Activated CD4-positive, alpha-beta T cell treated with anti-CD3 and anti-CD28 coated beads for 36 hours (primary cell): ENCODE measurements at regions of chr2 and their contacts with region 1.

Region 1: GRCh38 chr2:17719562-17720371 is 33.8 kb downstream of the SMC6 start:
- DNase-seq: no peak
- ATAC-seq: no peak
- H3K4me3 Mint-ChIP-seq: no peak overlapping the region
- H3K27ac Mint-ChIP-seq: no peak overlapping the region
- H3K4me1 Mint-ChIP-seq: no peaks in the 10 kb centered on the region
- H3K27me3 Mint-ChIP-seq: no peaks in the 10 kb centered on the region

Region 2: GRCh38 chr2:17733599-17733998 is 13.8 kb after region 1 on chr2:
- CTCF ChIA-PET with region 1: interaction called, 12 read pairs
- POLR2A ChIA-PET with region 1: no interaction called
- intact Hi-C with region 1: no loop called
- DNase-seq: no peak
- ATAC-seq: no peak
- H3K4me3 Mint-ChIP-seq: no peak overlapping the region
- H3K27ac Mint-ChIP-seq: no peak overlapping the region
- H3K4me1 Mint-ChIP-seq: no peaks in the 10 kb centered on the region
- H3K27me3 Mint-ChIP-seq: no peaks in the 10 kb centered on the region

Region 3: DNA sequence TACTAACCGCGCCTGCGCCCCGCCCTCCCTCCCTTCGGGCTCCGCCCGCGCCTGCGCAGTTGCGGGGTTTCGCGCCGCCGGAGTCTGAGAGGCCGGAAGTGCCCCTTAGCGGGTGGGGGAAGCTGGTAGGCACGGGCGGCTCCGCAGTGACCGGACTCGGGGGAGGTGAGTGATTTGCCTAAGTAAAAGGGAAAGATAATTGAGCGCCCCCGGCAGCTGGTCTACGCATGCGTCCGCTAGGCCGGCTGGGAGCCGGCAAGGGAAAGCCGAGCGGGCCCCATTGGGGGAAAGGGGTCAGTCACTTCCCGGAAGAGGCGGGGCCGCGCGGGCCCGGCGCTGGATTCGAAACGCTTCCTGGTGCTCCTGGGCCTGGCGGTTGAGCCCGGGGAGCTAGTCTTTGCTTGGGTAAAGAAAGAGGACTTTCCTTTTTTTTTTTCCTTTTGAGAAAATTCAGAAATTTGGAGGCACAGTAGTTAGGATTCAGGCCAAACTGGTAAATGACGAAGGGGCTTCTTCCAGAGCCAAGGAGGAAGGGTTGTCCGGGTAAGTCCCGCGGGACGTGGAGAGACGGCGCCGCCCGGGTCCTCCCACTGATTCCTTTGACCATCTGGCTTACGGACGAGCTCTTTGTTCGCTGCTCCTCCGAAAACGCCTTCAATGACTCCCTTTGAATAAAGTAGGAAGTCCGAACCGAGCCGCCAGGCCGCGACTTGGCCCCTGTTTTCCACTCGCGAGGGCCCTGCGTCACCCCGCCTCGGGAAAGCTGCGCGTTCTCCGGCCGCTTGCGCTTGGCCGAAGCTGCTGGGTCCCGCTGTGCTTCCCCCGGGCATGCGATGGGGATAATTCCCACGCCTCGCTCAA is 34.3 kb after region 1 on chr2 and contains the starts of genes GEN1 and SMC6:
- CTCF ChIA-PET with region 1: interaction called, 3 read pairs
- POLR2A ChIA-PET with region 1: no interaction called
- intact Hi-C with region 1: loop called in 1 of 2 experiments (anchors 1 kb)
- DNase-seq: peak; percentile 95
- ATAC-seq: peak; percentile 90
- H3K4me3 Mint-ChIP-seq: peak within 1 kb of the TSS; percentile 91
- H3K27ac Mint-ChIP-seq: peak within 1 kb of the TSS; percentile 93
- H3K4me1 Mint-ChIP-seq: peaks cover 20% of the 10 kb centered on the region
- H3K27me3 Mint-ChIP-seq: no peaks in the 10 kb centered on the region
- total RNA-seq, gene GEN1: 21.9 to 25.4 TPM
- total RNA-seq, gene SMC6: 25.4 to 26.3 TPM

Region 4: DNA sequence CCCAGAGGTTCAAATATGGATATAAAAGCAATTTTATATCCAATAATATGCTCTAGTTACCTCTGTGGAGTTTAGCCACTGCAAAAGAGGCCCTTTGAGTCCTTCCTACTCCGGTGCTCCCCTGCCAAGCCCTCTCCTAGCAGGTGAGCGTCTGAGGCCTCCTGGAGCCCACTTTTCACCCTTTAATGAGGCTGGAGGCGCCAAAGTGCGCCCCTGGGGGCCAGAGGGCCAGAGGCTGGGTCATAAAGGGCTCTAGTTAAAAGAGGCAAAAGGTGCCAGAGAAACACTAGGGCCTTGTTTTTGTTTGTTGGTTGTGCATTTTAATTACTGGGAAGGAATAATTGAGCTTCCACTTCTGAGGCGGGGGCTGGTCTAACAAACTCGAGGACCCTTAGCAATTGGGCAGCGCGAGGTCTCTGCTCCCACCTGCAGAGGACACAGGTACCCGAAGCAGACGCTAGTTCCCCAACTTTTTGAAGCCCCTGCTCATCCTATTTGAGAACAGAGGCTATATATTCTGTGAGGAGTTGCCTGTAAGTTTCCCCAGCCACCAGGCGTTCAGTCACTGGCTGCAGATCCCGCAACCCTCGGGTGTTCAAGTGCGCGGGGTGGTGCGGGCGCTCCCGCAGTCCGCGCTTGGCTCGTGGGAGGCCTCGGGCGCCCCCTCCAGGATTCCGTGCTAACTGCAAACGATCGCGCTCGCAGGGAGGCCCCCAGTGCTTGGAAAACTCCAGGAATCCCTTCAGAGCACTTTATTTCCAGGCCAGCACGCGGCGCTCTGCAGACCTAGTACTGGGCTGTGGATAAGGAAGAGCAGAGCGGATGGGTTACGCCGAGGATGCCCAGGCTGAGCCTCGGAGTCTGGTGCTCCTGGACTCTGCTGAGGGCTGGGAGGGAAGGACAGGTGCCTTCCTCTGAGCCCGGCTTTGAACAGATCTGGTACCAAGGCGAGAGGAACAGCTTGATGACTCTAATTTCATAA is 110.6 kb after region 1 on chr2:
- CTCF ChIA-PET with region 1: interaction called, 4 read pairs
- POLR2A ChIA-PET with region 1: no interaction called
- intact Hi-C with region 1: loop called (anchors 1 to 2 kb)
- DNase-seq: peak; percentile 72
- ATAC-seq: peak; percentile 84
- H3K4me3 Mint-ChIP-seq: no peak overlapping the region
- H3K27ac Mint-ChIP-seq: no peak overlapping the region
- H3K4me1 Mint-ChIP-seq: no peaks in the 10 kb centered on the region
- H3K27me3 Mint-ChIP-seq: peaks cover 35% of the 10 kb centered on the region

Region 5: DNA sequence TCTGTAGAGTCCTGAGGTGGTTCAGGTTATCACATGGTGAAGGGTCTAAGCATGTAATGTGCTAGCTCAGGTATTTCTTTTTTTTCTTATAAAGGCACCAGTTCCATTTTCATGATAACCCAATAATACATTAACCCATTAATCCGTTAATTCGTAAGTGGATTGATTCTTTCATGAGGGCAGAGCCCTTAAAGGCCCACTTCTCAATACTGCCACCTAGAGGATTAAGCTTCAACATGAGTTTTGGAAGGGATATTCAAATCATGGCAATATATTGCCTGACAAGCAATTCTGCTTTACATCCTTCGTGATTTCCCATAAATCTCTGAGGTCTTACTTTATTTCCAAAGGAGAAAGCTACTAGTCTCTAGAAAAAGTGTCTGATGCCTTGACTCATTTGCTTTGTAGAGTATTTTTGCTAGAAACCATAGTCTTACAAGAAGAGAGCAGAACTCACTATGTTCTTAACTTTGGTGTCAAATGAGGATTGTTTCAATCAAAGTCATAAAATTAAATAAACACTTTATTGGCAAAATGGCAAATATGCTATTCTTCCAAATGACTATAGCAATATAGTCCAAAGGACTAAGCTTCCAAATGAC is 430.0 kb after region 1 on chr2:
- CTCF ChIA-PET with region 1: interaction called, 5 read pairs
- POLR2A ChIA-PET with region 1: no interaction called
- intact Hi-C with region 1: loop called in 1 of 2 experiments (anchors 5 kb)
- DNase-seq: no peak
- ATAC-seq: peak; percentile 39
- H3K4me3 Mint-ChIP-seq: no peak overlapping the region
- H3K27ac Mint-ChIP-seq: no peak overlapping the region
- H3K4me1 Mint-ChIP-seq: no peaks in the 10 kb centered on the region
- H3K27me3 Mint-ChIP-seq: peaks cover 6% of the 10 kb centered on the region

Region 6: DNA sequence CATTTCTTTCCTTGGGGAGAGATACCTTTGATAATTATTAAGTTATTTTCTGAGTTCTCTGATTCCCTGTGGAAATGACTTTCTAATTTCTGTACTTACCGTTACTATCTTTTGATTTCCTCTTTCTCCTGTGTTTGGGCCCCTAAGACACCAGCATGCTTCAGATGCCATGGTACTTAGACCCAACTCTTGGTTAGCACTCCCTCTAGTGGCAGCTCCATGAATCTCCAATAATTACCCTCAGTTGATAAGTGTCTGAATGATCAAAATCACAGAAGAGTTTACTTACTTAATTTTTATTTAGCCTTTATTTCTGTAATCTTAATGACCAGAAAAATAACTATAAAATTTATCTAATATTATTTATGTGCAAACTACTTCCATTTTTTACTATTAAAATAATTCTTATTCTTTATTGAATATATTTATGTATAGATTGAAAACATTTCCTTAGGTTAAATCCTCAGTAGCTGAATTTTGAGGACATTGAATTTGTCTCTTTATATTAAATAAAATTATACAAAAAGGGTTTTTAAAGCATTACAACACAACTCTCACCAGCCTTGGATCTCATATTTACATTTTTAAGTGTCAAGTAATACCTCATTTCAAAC is 459.1 kb after region 1 on chr2:
- CTCF ChIA-PET with region 1: no interaction called
- POLR2A ChIA-PET with region 1: no interaction called
- intact Hi-C with region 1: loop called in 1 of 2 experiments (anchors 1 kb)
- DNase-seq: peak; percentile 52
- ATAC-seq: peak; percentile 55
- H3K4me3 Mint-ChIP-seq: no peak overlapping the region
- H3K27ac Mint-ChIP-seq: no peak overlapping the region
- H3K4me1 Mint-ChIP-seq: no peaks in the 10 kb centered on the region
- H3K27me3 Mint-ChIP-seq: peaks cover 6% of the 10 kb centered on the region

Region 7: GRCh38 chr2:18378020-18378653 is 658.4 kb after region 1 on chr2:
- CTCF ChIA-PET with region 1: no interaction called
- POLR2A ChIA-PET with region 1: no interaction called
- intact Hi-C with region 1: loop called in 1 of 2 experiments (anchors 5 kb)
- DNase-seq: peak; percentile 39
- ATAC-seq: peak; percentile 55
- H3K4me3 Mint-ChIP-seq: no peak overlapping the region
- H3K27ac Mint-ChIP-seq: no peak overlapping the region
- H3K4me1 Mint-ChIP-seq: no peaks in the 10 kb centered on the region
- H3K27me3 Mint-ChIP-seq: peaks cover 4% of the 10 kb centered on the region